AG04449 (cell line): ENCODE measurements at regions of chr1 and their contacts with region 1.

Region 1: DNA sequence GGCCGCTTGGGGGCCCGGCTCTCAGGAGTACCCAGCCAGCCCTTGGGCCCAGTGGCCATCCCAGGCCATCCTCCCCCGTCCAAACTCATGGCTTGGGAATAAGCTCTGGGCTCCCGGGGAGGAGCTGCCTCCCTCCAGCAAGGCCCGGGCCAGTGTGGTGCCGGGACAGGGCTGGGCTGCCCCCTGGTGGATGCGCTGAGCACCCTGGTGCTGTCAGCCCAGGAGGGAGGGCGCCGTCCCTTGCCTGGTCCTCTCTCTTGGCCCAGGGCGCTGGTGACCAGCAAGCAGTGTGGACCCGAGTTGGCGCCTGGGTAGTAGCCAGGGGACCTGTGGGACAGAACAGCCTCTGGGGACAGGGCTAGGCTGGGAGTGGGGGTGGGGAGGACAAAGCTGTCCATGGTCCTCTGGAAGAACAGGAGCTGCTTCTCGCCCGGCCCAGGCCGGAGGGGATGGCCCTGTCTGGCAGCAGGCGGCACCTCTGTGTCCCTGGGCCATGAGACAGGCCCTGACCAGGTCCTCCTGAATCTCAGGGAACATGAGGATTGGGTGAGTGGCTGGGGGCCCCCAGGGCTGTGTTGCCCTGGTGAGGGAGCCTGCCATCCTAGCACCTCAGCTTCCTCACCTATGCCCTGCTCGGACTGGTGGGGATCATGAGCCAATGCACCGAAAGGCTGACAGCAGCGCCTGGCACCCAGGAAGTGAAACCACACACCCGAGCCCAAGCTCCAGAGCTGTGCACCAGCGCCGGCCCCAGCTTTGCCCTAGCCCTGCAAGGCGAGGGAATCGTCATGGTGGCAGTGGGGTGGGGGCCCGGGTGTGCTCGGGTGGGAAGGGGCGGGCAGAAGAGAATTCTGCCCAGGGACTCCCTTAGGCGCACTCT is 9.4 kb downstream of the MORN1 start:
- DNase-seq: peak; percentile 21
- H3K4me3 ChIP-seq: no peak overlapping the region
- CTCF ChIP-seq: peak; percentile 99

Region 2: GRCh38 chr1:2227346-2228153 is 154.4 kb before region 1 on chr1:
- CTCF ChIA-PET with region 1: interaction called, 52 read pairs
- POLR2A ChIA-PET with region 1: interaction called, 11 read pairs
- DNase-seq: no peak
- H3K4me3 ChIP-seq: peak overlapping the region; percentile 83
- CTCF ChIP-seq: no peak

Region 3: DNA sequence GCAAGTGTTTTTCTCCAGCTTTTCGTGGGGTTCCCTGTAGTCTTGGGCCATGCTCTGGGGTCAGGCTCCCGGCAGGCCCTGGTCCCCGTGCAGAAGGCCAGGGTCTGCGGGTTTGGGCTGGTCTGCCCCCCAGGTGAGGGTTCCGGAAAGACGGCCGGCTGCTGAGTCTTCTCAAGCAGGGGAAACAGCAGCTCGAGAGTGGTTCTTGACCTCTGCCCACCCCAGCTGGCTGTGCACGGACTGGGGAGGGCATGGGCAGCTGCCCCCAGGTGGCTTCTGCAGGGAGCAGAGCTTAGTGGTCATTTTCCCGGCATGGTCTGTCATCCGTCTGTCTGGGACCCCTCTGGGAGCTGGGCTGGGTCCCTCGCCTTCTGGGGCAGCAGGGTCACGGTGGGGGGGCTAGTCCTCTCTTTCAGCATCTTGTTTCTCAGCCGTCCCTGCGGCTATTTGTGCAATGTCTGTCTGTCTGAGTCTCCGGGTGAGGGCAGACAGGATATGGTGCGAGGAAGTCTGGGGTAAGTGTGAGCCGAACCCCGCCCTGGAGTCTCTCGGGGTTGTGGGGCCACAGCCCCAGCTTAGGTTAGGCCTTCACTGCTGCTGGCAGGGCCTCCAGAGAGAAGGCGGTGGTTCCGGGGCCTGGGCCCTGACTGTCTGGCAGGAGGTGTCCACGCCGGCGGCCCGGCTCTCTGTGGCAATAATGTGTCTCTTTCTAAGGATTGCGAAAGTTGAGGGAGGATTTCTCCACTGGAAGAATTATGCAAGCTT is 147.8 kb before region 1 on chr1:
- CTCF ChIA-PET with region 1: interaction called, 52 read pairs
- POLR2A ChIA-PET with region 1: interaction called, 11 read pairs
- DNase-seq: no peak
- H3K4me3 ChIP-seq: peak overlapping the region; percentile 83
- CTCF ChIP-seq: no peak

Region 4: GRCh38 chr1:2314803-2315673 is 66.9 kb before region 1 on chr1:
- CTCF ChIA-PET with region 1: interaction called, 43 read pairs
- POLR2A ChIA-PET with region 1: no interaction called
- DNase-seq: no peak
- H3K4me3 ChIP-seq: peak overlapping the region; percentile 54
- CTCF ChIP-seq: peak; percentile 73

Region 5: GRCh38 chr1:2322065-2322571 is 59.9 kb before region 1 on chr1:
- CTCF ChIA-PET with region 1: interaction called, 43 read pairs
- POLR2A ChIA-PET with region 1: no interaction called
- DNase-seq: peak; percentile 54
- H3K4me3 ChIP-seq: no peak overlapping the region
- CTCF ChIP-seq: peak; percentile 34

Region 6: DNA sequence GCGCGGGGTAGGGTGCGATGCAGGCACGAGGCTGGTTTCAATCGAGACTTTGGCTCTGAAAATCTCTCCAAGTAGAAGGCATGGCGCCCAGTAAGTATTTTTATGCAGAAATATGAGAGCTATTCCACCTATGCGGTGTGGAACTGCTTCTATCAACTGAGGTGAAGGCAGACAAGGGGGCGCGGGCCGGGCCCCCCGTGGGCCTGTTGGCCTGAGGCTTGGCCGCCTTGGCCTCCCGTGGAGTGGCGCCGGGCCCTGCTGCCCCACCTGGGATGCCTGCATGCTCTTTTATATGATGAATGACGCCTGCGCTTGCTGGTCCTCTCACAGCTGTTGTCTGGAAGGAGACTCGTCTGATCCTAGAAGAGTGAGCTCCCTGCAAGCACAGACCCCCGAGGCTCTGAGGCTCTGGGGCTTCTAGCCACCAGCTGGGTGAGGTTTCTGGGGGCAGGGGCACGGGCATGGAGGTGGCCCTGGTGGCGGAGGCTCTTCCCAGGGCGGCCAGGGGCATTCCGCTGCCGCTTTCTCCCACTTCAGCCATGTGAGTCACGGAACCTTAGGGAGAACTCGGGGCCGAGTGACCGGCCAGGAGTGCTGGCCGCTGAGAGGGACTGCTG is 26.8 kb before region 1 on chr1:
- CTCF ChIA-PET with region 1: interaction called, 11 read pairs
- POLR2A ChIA-PET with region 1: no interaction called
- DNase-seq: no peak
- H3K4me3 ChIP-seq: no peak overlapping the region
- CTCF ChIP-seq: no peak

Region 7: GRCh38 chr1:2368053-2368736 is 13.8 kb before region 1 on chr1:
- CTCF ChIA-PET with region 1: interaction called, 22 read pairs
- POLR2A ChIA-PET with region 1: no interaction called
- DNase-seq: no peak
- H3K4me3 ChIP-seq: no peak overlapping the region
- CTCF ChIP-seq: no peak